PC-3 (cell line): ENCODE measurements at regions of chr7 and their contacts with region 1.

Region 1: DNA sequence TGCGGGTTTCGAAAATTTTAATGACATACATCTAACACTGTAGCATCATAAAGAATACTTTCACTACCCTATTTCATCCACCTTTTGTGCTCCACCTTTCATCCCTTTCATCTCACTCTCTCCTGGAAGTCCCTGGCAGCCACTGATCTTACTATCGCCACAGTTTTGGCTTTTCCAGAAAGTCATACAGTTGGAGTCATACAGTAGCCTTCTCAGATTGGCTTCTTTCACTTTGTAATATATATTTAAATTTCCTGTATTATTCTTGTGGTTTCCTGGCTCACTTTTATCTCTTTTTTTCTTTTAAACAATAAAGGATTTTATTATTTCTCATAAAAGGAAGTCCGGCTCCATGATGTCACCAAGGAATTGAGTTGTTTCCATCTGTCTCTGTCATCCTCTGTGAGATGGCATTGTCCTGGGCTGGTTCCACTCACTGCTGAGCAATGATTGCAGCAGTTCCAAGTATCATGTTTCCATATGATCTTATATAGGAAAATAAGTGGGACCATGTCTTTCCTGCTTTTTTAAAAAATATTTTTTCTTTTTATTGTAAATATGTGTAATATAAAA is 626.3 kb downstream of the POM121L12 start:
- DNase-seq: no peak
- ATAC-seq: peak; percentile 68
- H3K4me3 ChIP-seq: no peak overlapping the region
- H3K27ac ChIP-seq: no peak overlapping the region
- H3K4me1 ChIP-seq: peaks cover 5% of the 10 kb centered on the region; the same call in 1 of the 2 replicates
- H3K27me3 ChIP-seq: no peaks in the 10 kb centered on the region
- CTCF ChIP-seq: no peak

Region 2: GRCh38 chr7:54260941-54261371 is 599.2 kb after region 1 on chr7:
- CTCF ChIA-PET with region 1: no interaction called
- POLR2A ChIA-PET with region 1: no interaction called
- intact Hi-C with region 1: loop called (anchors 5 kb)
- DNase-seq: peak; percentile 81
- ATAC-seq: peak; percentile 97
- H3K4me3 ChIP-seq: no peak overlapping the region
- H3K27ac ChIP-seq: peak overlapping the region; percentile 72
- H3K4me1 ChIP-seq: peaks cover 4% of the 10 kb centered on the region; the same call in 1 of the 2 replicates
- H3K27me3 ChIP-seq: no peaks in the 10 kb centered on the region
- CTCF ChIP-seq: no peak